T-cell (primary cell): ENCODE measurements at regions of chr6 and their contacts with region 1.

Region 1: GRCh38 chr6:160455541-160456213 is 107.5 kb downstream of the SLC22A3 start:
- DNase-seq: peak; percentile 37 to 82 (median 66)
- ATAC-seq: peak; percentile 88 to 95 (median 92)
- H3K4me3 ChIP-seq: no peak overlapping the region
- H3K4me3 Mint-ChIP-seq: no peak overlapping the region
- H3K27ac ChIP-seq: no peak overlapping the region
- H3K27ac Mint-ChIP-seq: no peak overlapping the region
- H3K4me1 ChIP-seq: peaks cover 14 to 33% of the 10 kb centered on the region in 2 experiments
- H3K4me1 Mint-ChIP-seq: peaks cover 30 to 36% (median 33%) of the 10 kb centered on the region in 3 donors
- H3K27me3 ChIP-seq: peaks cover 0 to 7% of the 10 kb centered on the region in 2 experiments
- H3K27me3 Mint-ChIP-seq: peaks cover 0 to 17% of the 10 kb centered on the region in 2 donors

Region 2: DNA sequence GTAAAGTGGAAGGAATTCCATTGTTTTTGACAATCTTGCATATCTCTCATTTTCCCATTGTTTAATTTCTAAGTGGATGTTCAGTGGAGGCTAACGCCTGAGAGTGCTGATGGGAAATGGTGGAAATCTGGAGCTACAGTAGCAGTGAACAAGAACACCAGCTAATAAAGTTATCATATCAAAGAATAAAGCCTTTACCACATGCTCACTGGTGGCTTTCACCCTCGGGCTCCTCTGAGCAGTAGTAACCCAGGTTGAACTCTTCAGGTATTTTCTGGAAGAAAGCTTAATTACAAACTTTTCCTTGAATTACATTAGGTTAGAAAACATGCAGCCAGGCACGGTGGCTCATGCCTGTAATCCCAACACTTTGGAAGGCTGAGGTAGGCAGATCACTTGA is 704.2 kb before region 1 on chr6:
- CTCF ChIA-PET with region 1: no interaction called
- POLR2A ChIA-PET with region 1: interaction called in 1 of 2 experiments, 10 read pairs
- DNase-seq: no peak
- ATAC-seq: no peak
- H3K4me3 ChIP-seq: no peak overlapping the region
- H3K4me3 Mint-ChIP-seq: no peak overlapping the region
- H3K27ac ChIP-seq: no peak overlapping the region
- H3K27ac Mint-ChIP-seq: no peak overlapping the region
- H3K4me1 ChIP-seq: no peaks in the 10 kb centered on the region
- H3K4me1 Mint-ChIP-seq: peaks cover 0 to 10% (median 3%) of the 10 kb centered on the region in 3 donors
- H3K27me3 ChIP-seq: no peaks in the 10 kb centered on the region
- H3K27me3 Mint-ChIP-seq: no peaks in the 10 kb centered on the region

Region 3: GRCh38 chr6:160137989-160138835 is 317.5 kb before region 1 on chr6:
- CTCF ChIA-PET with region 1: interaction called, 12 to 20 read pairs
- POLR2A ChIA-PET with region 1: no interaction called
- DNase-seq: peak; percentile 26 to 75 (median 57)
- ATAC-seq: peak; percentile 54 to 63 (median 58)
- H3K4me3 ChIP-seq: no peak overlapping the region
- H3K4me3 Mint-ChIP-seq: no peak overlapping the region
- H3K27ac ChIP-seq: no peak overlapping the region
- H3K27ac Mint-ChIP-seq: no peak overlapping the region
- H3K4me1 ChIP-seq: peaks cover 0 to 3% of the 10 kb centered on the region in 2 experiments
- H3K4me1 Mint-ChIP-seq: peaks cover 9 to 10% (median 9%) of the 10 kb centered on the region in 3 donors
- H3K27me3 ChIP-seq: peaks cover 0 to 3% of the 10 kb centered on the region in 2 experiments
- H3K27me3 Mint-ChIP-seq: no peaks in the 10 kb centered on the region

Region 4: DNA sequence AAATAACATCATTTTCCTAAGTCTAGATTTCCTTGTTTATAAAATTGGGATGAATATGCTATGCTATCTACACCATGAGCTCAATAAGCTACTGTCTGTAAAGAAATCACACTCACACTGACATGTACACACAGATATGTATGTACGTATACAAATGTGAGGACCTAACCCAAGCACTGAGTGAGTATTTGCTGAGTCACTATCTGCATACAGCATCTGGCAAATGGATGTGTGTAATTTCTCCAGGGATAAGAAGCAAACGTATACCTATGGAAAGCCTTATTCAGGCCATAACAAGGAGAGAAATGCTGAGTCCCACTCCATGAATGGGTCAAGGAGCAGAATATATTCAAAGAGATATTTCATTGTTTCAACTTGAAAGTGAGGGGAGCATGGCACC is 54.5 kb after region 1 on chr6:
- CTCF ChIA-PET with region 1: no interaction called
- POLR2A ChIA-PET with region 1: no interaction called
- DNase-seq: no peak
- ATAC-seq: no peak
- H3K4me3 ChIP-seq: no peak overlapping the region
- H3K4me3 Mint-ChIP-seq: no peak overlapping the region
- H3K27ac ChIP-seq: no peak overlapping the region
- H3K27ac Mint-ChIP-seq: no peak overlapping the region
- H3K4me1 ChIP-seq: no peaks in the 10 kb centered on the region
- H3K4me1 Mint-ChIP-seq: peaks cover 0 to 16% (median 0%) of the 10 kb centered on the region in 3 donors
- H3K27me3 ChIP-seq: peaks cover 0 to 7% of the 10 kb centered on the region in 2 experiments
- H3K27me3 Mint-ChIP-seq: peaks cover 4 to 18% of the 10 kb centered on the region in 2 donors